Psoas muscle (tissue), 8 donors: ENCODE measurements at regions of chr3 and their contacts with region 1.

Region 1: GRCh38 chr3:108359011-108359410 is 62.7 kb downstream of the HHLA2 start:
- DNase-seq: no peak
- ATAC-seq: no peak
- H3K4me3 ChIP-seq: no peak overlapping the region
- H3K27ac ChIP-seq: no peak overlapping the region
- H3K4me1 ChIP-seq: no peaks in the 10 kb centered on the region
- H3K27me3 ChIP-seq: no peaks in the 10 kb centered on the region
- CTCF ChIP-seq: no peak

Region 2: DNA sequence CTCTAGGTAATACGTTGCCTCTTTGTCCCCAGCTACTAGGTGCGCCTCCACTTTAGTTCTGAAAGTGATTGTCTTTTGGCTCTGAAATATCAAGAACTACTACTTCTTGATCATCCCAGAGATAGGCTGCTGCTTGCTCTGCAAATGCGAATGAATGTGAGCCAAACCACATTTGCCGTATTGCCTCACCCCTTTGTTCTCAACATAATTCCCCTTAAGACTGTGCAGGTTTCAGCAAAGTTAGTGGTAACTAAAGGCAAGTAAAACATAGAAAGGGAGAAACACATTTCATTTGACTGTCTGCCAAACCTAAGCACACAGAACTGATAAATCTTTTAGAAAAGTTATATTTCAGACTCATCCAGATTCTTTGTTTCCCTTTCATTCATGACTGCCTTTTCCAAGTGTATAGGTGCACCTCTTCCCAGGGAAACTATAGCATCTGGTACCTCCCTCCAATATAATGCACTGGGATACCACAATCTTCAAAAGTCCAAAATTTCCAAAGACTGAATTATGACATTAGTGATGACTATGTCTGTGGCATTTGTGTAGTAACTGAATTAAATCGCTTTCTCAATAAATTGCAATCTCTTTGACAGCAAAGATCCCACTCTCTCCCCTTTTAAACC is 1769.6 kb before region 1 on chr3:
- intact Hi-C with region 1: loop called in 1 of 2 experiments (anchors 10 kb)
- DNase-seq: no peak
- ATAC-seq: no peak
- H3K4me3 ChIP-seq: no peak overlapping the region
- H3K27ac ChIP-seq: no peak overlapping the region
- H3K4me1 ChIP-seq: peaks cover 3% of the 10 kb centered on the region
- H3K27me3 ChIP-seq: no peaks in the 10 kb centered on the region
- CTCF ChIP-seq: no peak

Region 3: GRCh38 chr3:107988465-107989175 is 370.4 kb before region 1 on chr3:
- intact Hi-C with region 1: no loop called
- DNase-seq: peak; percentile 53 to 63
- ATAC-seq: peak in 2 of 4 donors; percentile 27 to 38
- H3K4me3 ChIP-seq: no peak overlapping the region
- H3K27ac ChIP-seq: no peak overlapping the region
- H3K4me1 ChIP-seq: peaks cover 10% of the 10 kb centered on the region
- H3K27me3 ChIP-seq: no peaks in the 10 kb centered on the region
- CTCF ChIP-seq: no peak

Region 4: GRCh38 chr3:108328821-108329486 is 30.1 kb before region 1 on chr3:
- intact Hi-C with region 1: no loop called
- DNase-seq: no peak
- ATAC-seq: no peak
- H3K4me3 ChIP-seq: no peak overlapping the region
- H3K27ac ChIP-seq: no peak overlapping the region
- H3K4me1 ChIP-seq: no peaks in the 10 kb centered on the region
- H3K27me3 ChIP-seq: no peaks in the 10 kb centered on the region
- CTCF ChIP-seq: no peak